ENCODE measurements at regions of chr6 and their contacts with region 1.

Region 1: DNA sequence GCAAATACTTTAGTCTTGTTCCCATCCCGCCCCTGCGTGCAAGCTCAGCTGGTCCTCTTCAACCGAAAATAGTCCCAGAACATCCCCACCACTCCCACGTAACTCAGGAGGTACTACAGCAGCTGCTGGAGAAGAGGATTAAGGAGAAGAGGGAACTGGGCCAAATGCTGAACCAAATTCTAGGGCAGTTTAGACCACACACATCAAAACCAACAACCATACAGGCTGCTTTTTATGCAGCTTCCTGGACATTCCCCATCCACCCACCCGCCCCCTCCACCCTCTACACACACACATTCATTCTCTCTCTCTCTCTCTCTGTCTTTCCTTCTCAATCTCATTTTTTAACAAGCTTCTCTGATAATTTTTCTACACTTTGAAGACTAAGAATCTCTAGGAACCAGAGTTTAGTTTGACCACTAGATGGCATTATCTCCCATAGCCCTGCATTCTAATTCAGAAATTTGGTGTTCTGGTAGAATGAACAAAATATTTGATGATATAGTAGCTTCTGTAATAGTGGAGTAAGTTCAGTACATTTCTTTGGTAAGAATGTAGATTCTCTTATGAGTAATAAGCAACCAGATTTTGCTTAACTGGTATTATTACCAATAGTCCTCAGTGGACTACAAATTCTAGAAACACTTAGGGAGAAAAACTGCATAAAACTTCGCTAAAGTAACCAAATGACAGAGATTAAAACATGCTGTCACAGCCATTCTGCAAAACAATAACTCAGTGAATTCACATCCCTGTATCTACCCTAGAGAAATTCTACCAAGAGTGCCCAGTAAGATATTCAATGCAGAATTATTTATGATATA is 52.1 kb upstream of the BEND6 start:
- DNase-seq: peak; percentile 40
- CTCF ChIP-seq: peak; percentile 58

Region 2: DNA sequence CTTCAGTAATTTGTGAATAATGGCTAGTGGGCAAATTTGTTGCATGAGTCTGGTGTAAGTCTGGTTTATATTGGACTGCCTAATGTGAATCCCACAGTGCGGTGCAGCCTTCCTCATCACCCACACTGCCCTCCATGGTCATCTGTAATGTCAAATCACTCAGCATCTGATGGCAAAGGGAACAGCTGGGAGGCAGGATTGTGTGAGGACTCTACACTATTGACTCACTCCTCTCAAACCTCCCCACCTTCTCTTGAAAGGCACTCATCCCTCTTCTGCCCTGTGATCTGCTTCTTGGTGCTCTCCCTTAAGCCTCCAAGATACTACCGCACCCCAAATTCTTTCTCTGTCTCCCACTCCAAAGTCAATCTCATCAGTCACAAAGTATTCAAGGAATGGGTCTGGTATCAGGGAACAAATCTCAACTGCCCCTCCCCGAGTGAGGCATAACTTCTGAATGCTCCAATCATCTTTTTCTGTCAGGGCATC is 93.9 kb before region 1 on chr6:
- in situ Hi-C with region 1: no loop called
- DNase-seq: no peak
- CTCF ChIP-seq: no peak

Region 3: GRCh38 chr6:57021086-57021720 is 118.3 kb after region 1 on chr6:
- in situ Hi-C with region 1: loop called (anchors 25 kb)
- DNase-seq: peak; percentile 60
- CTCF ChIP-seq: peak; percentile 43

Region 4: DNA sequence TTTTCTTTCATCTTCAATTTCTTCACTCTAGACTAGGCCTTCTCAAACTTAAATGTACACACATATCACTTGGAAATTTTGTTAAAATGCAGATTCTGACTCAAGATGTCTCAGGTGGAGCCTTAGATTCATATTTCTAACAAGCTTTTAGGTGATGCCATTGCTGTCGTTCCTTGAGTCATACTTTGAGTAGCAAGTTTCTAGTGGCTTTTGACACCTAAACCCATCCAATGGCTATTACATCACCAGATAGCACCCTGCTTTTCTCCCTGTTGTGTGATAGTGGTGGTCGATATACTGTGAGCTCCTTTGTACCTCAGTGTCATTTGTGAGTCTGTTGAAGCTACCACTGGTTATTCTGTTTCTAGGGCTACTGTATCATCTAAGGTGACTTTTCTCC is 234.5 kb after region 1 on chr6:
- in situ Hi-C with region 1: no loop called
- DNase-seq: no peak
- CTCF ChIP-seq: no peak

Measured in GM13976 (cell line).